ENCODE measurements at regions of chr2 and their contacts with region 1.

Region 1: DNA sequence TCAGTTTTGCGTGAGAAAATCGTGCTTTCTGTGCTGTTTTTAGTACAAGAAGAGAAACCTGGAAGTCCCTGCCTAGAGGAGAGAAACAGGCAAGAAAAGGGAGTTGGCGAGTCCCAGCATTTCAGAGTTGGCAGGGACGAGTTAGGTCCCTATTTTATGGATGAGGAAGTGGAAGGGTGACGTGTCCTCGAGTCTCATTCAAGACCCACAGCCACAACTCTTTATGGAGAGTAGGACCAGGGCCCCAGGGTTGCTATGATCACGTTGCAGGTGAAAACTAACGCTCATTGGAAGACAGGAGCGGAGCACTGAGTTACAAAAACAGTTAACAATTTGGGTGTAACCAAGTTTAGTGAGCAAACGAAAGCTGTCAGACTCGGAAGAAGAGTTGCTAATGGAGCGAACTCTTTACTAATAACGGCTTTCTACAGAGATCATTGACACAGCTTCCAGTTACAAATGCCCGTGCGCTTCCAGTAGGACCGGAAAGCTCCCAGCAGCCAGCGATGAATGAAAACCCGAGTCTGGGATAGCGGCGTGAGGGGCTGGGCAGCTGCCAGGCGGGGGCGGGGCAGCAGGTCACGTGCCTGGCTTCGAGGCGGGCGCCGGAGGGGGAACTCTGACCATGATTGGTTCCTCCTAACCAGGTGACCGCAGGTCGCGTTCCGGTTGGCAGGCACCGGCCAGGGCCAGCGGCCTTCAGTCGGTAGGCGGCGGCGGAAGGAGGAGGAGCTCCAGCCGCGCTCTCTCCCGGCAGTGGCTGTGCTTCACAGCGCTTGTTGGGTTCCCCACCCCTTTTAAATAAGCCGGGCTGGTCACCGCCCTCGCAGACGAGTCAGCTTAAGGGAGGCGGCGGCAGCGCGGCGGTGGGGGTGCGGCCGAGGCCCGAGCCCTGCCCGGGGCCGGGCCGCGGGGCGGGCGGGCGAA is at the start of gene CCNYL1:
- DNase-seq: peak; percentile 97 to 100 (median 99)

Region 2: DNA sequence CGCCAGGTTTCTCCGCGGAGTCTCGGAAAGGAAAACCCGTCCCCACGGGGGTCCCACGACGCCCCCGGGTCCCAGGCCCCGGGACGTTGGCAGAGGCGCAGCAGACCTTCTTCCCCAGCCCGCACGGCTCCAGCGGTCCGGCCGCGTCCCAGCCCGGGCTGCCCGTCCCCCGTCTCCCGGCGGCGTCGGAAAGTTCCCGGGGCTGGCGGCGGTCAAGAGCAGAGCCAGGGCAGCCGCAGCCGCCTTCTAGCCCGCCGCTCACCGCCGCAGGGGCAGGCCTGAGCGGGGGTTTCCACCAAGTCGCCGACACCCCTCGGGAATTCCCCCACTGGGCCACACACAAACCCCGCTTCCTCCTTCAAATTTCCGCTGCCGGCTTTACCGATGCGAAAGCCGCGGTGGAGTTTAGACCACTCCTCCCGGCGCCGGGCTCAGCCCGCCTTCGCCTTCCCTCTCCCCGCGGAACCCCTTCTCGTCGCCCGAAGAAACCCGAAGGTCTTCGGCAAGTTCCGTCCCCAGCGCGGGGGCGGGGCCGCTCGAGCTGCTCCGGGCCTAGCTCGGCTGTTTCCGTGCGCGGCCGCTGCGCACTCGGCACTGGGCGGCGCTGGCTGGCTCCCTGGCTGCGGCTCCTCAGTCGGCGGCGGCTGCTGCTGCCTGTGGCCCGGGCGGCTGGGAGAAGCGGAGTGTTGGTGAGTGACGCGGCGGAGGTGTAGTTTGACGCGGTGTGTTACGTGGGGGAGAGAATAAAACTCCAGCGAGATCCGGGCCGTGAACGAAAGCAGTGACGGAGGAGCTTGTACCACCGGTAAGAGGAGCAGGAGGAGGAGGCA is 181.5 kb before region 1 on chr2 and contains the start of gene CREB1:
- intact Hi-C with region 1: loop called (anchors 10 kb)
- DNase-seq: peak; percentile 95 to 100 (median 98)

Region 3: GRCh38 chr2:207828361-207829057 is 117.4 kb after region 1 on chr2:
- intact Hi-C with region 1: no loop called
- DNase-seq: peak in 4 of 42 donors; percentile 11 to 47 (median 23)

Region 4: DNA sequence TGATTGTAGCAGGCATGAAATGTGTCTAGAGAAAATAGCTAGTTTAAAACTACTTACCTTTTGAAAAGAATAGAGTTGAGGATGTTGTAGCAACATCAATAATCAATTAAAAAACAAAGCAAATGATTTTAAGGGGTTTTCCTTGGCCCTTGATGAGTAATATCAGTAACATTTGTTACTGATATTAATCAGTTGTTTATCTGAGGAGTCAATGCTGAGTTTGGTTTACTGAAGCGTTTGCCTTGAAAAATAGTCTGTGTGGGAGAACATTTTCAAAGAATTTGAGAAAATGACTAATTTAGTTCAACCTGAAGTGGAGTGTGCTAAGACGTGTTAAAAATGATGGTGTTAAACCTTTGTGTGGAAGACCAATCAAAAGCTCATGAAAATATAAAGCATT is 704.8 kb after region 1 on chr2:
- intact Hi-C with region 1: no loop called
- DNase-seq: no peak

Measured in head of caudate nucleus (tissue), 42 donors.